Cardiac septum (tissue), 1 donor: ENCODE measurements at regions of chrX and their contacts with region 1.

Region 1: DNA sequence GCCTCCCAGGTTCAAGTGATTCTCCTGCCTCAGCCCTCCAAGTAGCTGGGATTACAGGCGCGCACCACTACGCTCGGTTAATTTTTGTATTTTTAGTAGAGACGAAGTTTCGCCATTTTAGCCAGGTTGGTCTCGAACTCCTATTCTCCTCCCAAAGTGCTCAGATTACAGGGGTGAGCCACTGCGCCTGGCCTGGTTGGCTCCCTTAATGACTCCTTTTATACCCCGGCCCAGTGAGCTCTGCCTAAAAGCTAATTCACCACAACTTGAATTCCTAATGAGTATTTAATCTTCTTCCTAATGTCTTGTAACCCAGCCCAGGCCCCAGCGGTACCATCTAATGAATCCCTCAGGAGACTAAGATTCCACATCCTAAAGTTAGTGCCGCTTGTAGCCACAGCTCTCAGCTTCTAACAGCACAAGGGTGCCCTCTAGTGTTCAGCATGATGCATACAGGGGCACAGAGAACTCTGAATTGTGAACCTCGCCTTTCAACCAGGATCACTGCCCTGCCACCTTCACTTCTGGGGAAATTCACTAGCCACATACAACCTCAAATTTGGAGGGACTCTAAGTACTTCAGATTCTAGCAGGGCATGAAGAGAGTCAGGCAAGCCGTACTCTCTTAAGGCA is 89.5 kb downstream of the OR13H1 start:
- DNase-seq: no peak

Region 2: GRCh38 chrX:130975947-130976346 is 657.5 kb before region 1 on chrX:
- intact Hi-C with region 1: loop called (anchors 5 kb)
- DNase-seq: no peak

Region 3: GRCh38 chrX:131068945-131069719 is 564.3 kb before region 1 on chrX:
- intact Hi-C with region 1: loop called (anchors 10 kb)
- DNase-seq: no peak

Region 4: DNA sequence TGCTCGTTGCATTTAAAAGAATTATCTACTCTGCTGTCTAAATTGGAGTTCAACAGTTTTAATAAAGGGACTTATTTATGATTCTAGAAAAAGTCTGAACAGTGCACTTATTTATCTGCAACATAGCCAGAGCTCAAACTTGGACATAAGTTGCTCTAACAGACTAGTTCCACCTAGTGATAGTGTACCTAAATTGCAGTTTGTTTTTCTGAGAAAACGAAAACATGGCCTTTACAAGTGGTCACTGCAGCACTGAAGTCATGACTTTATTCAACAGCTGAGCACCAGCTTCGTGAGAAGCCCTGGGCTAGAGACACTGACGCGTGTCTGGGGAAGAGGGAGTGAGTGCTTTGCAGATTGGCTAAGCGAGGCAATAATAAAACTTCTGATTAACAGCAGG is 267.0 kb before region 1 on chrX:
- intact Hi-C with region 1: no loop called
- DNase-seq: no peak